Adrenal gland (tissue), 19 donors: ENCODE measurements at regions of chr3 and their contacts with region 1.

Region 1: DNA sequence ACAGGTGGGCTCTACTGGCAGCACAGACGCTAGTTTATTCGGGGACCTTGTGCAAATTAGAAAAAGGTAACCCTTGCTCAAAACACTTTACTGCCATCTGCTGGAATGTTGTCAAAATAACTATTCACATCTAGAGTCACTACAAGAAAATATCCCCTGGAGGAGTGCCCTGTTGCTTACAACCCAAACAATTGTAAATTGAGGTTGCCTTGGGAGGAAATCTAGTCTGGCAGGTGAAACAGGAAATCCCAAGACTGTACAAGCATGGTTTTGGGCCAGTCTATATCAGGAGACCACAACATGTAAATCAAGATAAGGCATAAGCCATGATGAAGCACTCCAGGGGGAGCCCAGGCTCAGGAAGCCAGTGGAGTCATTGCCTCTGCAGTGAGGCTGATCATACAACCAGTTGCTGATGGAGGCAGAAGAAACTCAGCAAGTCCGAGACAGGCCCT is 136.8 kb upstream of the ACP3 start:
- DNase-seq: no peak
- H3K4me3 ChIP-seq: no peak overlapping the region
- H3K27ac ChIP-seq: no peak overlapping the region
- H3K4me1 ChIP-seq: no peaks in the 10 kb centered on the region
- H3K27me3 ChIP-seq: no peaks in the 10 kb centered on the region
- CTCF ChIP-seq: peak; percentile 31 to 49 (median 38)
- POLR2A ChIP-seq: no peak

Region 2: DNA sequence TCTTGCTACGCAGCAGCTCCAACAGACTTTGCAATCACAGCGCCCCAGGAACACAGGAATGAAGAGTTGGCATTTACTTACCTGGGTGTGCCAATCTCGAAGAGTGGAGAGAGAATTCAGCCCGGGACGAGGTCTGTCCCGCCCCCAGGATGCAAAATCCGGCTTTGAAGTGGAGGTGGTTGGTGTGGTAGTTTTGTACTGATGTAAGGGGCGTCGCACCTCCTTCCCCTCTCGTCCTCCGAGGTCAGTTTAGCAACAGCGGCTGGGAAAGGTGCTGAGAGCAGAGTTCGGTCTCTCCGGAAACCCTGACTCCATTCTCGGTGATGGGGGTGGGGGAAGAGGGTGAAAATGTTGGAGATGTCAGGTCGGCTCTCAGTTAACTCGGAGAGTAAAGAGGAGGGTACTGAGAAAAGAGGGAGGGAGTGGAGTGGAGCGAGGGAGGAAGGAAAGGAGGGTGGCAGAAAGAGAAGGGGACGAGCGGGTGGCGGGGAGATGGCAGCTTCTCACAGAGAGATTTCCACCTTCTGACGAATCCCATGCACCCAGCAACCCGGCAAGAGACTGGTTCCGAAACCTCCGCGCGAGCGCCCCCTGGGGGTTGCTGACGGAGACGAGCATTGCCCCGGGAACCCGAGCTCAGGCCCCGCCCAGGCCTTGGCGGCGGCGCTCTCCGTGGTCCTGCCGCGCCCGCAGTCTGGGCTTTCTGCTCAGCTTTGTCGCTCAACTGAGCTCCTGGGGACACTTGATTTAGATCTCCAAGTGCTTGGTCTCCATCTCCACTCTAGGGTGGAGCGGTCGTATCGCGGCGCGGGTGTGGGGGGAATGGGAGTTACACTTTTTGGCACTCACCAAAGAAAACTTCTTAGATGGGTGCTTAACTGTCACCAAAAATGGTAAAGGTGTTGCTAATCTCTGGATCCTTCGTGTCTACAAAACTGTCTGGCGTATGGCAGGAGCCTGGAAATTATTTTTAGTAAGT is 145.6 kb before region 1 on chr3 and contains the start of gene CPNE4:
- intact Hi-C with region 1: loop called in 1 of 2 experiments (anchors 10 kb)
- DNase-seq: peak; percentile 78 to 93 (median 89)
- H3K4me3 ChIP-seq: peak within 1 kb of the TSS in 1 of 4 donors; percentile 30
- H3K27ac ChIP-seq: no peak within 1 kb of the TSS
- H3K4me1 ChIP-seq: no peaks in the 10 kb centered on the region
- H3K27me3 ChIP-seq: peaks cover 25% of the 10 kb centered on the region
- CTCF ChIP-seq: peak; percentile 51 to 79 (median 69)
- POLR2A ChIP-seq: no peak
- total RNA-seq, gene CPNE4: 0.11 to 7.5 (median 0.54) TPM

Region 3: GRCh38 chr3:132343018-132343612 is 162.8 kb after region 1 on chr3:
- intact Hi-C with region 1: no loop called
- DNase-seq: peak; percentile 25 to 71 (median 47)
- H3K4me3 ChIP-seq: peak overlapping the region in 2 of 4 donors; percentile 9 to 38
- H3K27ac ChIP-seq: no peak overlapping the region
- H3K4me1 ChIP-seq: peaks cover 0 to 4% of the 10 kb centered on the region in 2 donors
- H3K27me3 ChIP-seq: no peaks in the 10 kb centered on the region
- CTCF ChIP-seq: peak; percentile 85 to 98 (median 92)
- POLR2A ChIP-seq: no peak